ENCODE measurements at regions of chr7 and their contacts with region 1.

Region 1: GRCh38 chr7:102272075-102272917 is 14.4 kb upstream of the SH2B2 start:
- DNase-seq: peak; percentile 80
- H3K4me3 Mint-ChIP-seq: no peak overlapping the region
- H3K27ac Mint-ChIP-seq: no peak overlapping the region
- H3K4me1 Mint-ChIP-seq: peaks cover 3% of the 10 kb centered on the region
- H3K27me3 Mint-ChIP-seq: no peaks in the 10 kb centered on the region

Region 2: GRCh38 chr7:101542527-101543241 is 729.6 kb before region 1 on chr7:
- CTCF ChIA-PET with region 1: interaction called, 29 read pairs
- POLR2A ChIA-PET with region 1: no interaction called
- intact Hi-C with region 1: loop called (anchors 1 kb)
- DNase-seq: peak; percentile 79
- H3K4me3 Mint-ChIP-seq: no peak overlapping the region
- H3K27ac Mint-ChIP-seq: no peak overlapping the region
- H3K4me1 Mint-ChIP-seq: peaks cover 3% of the 10 kb centered on the region
- H3K27me3 Mint-ChIP-seq: no peaks in the 10 kb centered on the region

Region 3: GRCh38 chr7:101602484-101603241 is 669.6 kb before region 1 on chr7:
- CTCF ChIA-PET with region 1: interaction called, 29 read pairs
- POLR2A ChIA-PET with region 1: no interaction called
- intact Hi-C with region 1: loop called (anchors 1 kb)
- DNase-seq: peak; percentile 80
- H3K4me3 Mint-ChIP-seq: no peak overlapping the region
- H3K27ac Mint-ChIP-seq: no peak overlapping the region
- H3K4me1 Mint-ChIP-seq: no peaks in the 10 kb centered on the region
- H3K27me3 Mint-ChIP-seq: no peaks in the 10 kb centered on the region

Region 4: DNA sequence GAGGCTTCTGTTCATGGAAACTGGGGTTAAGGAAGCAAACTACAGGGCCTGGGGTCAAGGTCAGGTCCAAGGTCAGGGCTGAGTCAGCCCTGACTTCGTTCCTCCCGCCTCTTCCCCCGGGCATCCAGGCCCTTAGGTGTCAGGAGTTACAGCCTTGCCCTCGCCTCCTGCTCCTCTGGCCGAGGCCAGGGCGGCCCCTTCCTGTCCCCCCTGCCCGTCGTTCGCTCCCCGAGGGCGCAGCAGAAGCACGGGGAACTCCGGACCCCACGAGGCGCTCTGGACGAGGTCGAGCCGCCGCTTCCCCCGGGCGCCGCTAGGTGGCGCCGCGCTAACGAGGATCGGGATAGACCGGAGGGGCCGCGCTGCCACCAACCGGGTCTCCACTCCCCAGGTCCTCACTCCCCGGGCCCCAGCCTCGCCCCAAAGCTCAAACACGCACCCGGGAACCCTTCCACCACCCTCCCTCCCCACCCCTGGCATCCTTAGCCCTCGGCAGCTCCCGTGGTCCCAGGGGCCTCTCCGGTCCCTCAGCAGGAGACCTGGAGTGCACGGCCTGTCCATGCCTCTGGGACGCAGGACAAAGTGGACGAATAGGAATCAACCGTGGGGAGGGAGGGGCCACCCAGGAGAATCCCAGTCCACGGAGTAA is 584.0 kb before region 1 on chr7:
- CTCF ChIA-PET with region 1: interaction called, 7 read pairs
- POLR2A ChIA-PET with region 1: no interaction called
- intact Hi-C with region 1: loop called (anchors 1 kb)
- DNase-seq: peak; percentile 83
- H3K4me3 Mint-ChIP-seq: no peak overlapping the region
- H3K27ac Mint-ChIP-seq: no peak overlapping the region
- H3K4me1 Mint-ChIP-seq: no peaks in the 10 kb centered on the region
- H3K27me3 Mint-ChIP-seq: peaks cover 1% of the 10 kb centered on the region